ENCODE measurements at regions of chr2 and their contacts with region 1.

Region 1: GRCh38 chr2:172465417-172466334 is 38.3 kb downstream of the ITGA6 start:
- DNase-seq: peak; percentile 90
- H3K4me3 ChIP-seq: no peak overlapping the region
- H3K27ac ChIP-seq: peak overlapping the region; percentile 43 to 63
- H3K4me1 ChIP-seq: peaks cover 28% of the 10 kb centered on the region
- H3K27me3 ChIP-seq: no peaks in the 10 kb centered on the region
- CTCF ChIP-seq: peak; percentile 74 to 96 (median 89)
- POLR2A ChIP-seq: no peak

Region 2: GRCh38 chr2:172052000-172052983 is 413.4 kb before region 1 on chr2:
- intact Hi-C with region 1: no loop called
- DNase-seq: no peak
- H3K4me3 ChIP-seq: no peak overlapping the region
- H3K27ac ChIP-seq: no peak overlapping the region
- H3K4me1 ChIP-seq: no peaks in the 10 kb centered on the region
- H3K27me3 ChIP-seq: no peaks in the 10 kb centered on the region
- CTCF ChIP-seq: no peak
- POLR2A ChIP-seq: no peak

Region 3: DNA sequence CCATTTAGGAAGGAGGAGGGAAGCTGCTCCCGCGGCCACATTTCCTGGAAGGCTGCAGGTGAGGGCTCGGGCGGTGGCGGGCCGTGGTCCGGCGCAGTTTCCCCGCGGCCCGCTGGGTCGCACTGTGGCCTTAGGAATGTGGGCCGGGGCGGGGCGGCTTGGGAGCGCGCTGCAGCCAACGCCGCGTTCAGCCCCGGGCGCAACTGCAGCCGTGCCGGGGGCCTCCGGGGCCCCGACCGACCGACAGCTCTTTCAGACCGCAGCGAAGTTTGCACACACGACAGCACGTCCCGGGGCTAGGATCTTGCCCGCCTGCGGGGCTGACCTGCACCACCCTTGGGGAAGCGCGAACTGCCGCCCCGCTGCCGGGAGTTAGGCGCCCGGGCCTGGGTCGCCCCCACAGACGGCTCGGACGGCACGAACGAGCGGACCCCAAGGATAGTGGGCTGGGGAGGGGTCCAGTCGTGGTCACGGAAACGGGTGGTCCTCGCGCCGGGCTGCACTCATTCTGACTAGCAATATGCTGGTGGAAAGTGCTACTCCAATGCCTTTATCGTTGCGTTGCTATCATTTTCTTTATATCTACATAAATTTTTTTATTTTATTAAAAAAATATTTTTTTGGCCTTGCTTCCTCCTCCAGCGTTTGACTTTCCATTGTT is 293.0 kb before region 1 on chr2:
- intact Hi-C with region 1: loop called (anchors 2 kb)
- DNase-seq: peak; percentile 77
- H3K4me3 ChIP-seq: peak overlapping the region; percentile 34 to 49
- H3K27ac ChIP-seq: peak overlapping the region in 1 of 2 donors; percentile 20
- H3K4me1 ChIP-seq: peaks cover 5% of the 10 kb centered on the region
- H3K27me3 ChIP-seq: no peaks in the 10 kb centered on the region
- CTCF ChIP-seq: peak; percentile 63 to 94 (median 88)
- POLR2A ChIP-seq: no peak

Region 4: GRCh38 chr2:172397148-172397834 is 68.4 kb before region 1 on chr2:
- intact Hi-C with region 1: no loop called
- DNase-seq: no peak
- H3K4me3 ChIP-seq: no peak overlapping the region
- H3K27ac ChIP-seq: no peak overlapping the region
- H3K4me1 ChIP-seq: no peaks in the 10 kb centered on the region
- H3K27me3 ChIP-seq: no peaks in the 10 kb centered on the region
- CTCF ChIP-seq: no peak
- POLR2A ChIP-seq: no peak

Measured in prostate gland (tissue), 2 donors.